ENCODE measurements at regions of chr15 and their contacts with region 1.

Region 1: GRCh38 chr15:37034835-37035748 is 65.3 kb downstream of the MEIS2 start:
- DNase-seq: peak; percentile 66
- ATAC-seq: peak; percentile 55
- H3K4me3 ChIP-seq: no peak overlapping the region
- H3K27ac ChIP-seq: no peak overlapping the region
- H3K4me1 ChIP-seq: peaks cover 17% of the 10 kb centered on the region
- H3K27me3 ChIP-seq: no peaks in the 10 kb centered on the region
- CTCF ChIP-seq: no peak
- POLR2A ChIP-seq: no peak
- RAD21 ChIP-seq: no peak

Region 2: DNA sequence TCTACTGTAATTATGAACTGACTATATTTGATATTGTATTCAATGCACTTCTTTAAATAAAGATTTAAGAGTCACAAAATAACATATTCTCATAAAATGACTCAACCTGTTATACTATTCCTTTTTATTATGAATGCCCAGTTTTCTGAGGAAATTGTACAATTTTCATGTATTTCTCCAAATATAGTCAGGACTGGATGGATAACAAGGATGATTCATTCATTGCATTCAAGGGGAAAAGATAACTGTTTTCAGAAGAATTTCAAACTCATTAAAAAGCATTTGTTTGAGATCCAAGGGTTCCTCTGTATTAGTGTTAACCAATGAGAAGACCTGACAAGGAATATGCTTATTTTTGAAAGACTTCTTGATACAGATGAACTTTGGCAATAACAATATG is 98.5 kb before region 1 on chr15:
- CTCF ChIA-PET with region 1: no interaction called
- POLR2A ChIA-PET with region 1: no interaction called
- dilution Hi-C with region 1: no loop called
- in situ Hi-C with region 1: no loop called
- intact Hi-C with region 1: no loop called
- DNase-seq: peak; percentile 67
- ATAC-seq: peak; percentile 75
- H3K4me3 ChIP-seq: no peak overlapping the region
- H3K27ac ChIP-seq: no peak overlapping the region
- H3K4me1 ChIP-seq: no peaks in the 10 kb centered on the region
- H3K27me3 ChIP-seq: no peaks in the 10 kb centered on the region
- CTCF ChIP-seq: no peak
- POLR2A ChIP-seq: no peak
- RAD21 ChIP-seq: no peak

Region 3: GRCh38 chr15:36970522-36970921 is 64.6 kb before region 1 on chr15:
- CTCF ChIA-PET with region 1: no interaction called
- POLR2A ChIA-PET with region 1: no interaction called
- dilution Hi-C with region 1: no loop called
- in situ Hi-C with region 1: loop called (anchors 10 kb)
- intact Hi-C with region 1: no loop called
- DNase-seq: no peak
- ATAC-seq: no peak
- H3K4me3 ChIP-seq: no peak overlapping the region
- H3K27ac ChIP-seq: no peak overlapping the region
- H3K4me1 ChIP-seq: peaks cover 4% of the 10 kb centered on the region; the same call in 1 of the 2 replicates
- H3K27me3 ChIP-seq: no peaks in the 10 kb centered on the region
- CTCF ChIP-seq: no peak
- POLR2A ChIP-seq: no peak
- RAD21 ChIP-seq: no peak

Region 4: GRCh38 chr15:37045859-37046740 is 11.0 kb after region 1 on chr15:
- CTCF ChIA-PET with region 1: interaction called, 10 read pairs
- POLR2A ChIA-PET with region 1: no interaction called
- dilution Hi-C with region 1: no loop called
- in situ Hi-C with region 1: no loop called
- intact Hi-C with region 1: no loop called
- DNase-seq: no peak
- ATAC-seq: no peak
- H3K4me3 ChIP-seq: no peak overlapping the region
- H3K27ac ChIP-seq: no peak overlapping the region
- H3K4me1 ChIP-seq: peaks cover 7% of the 10 kb centered on the region
- H3K27me3 ChIP-seq: no peaks in the 10 kb centered on the region
- CTCF ChIP-seq: no peak
- POLR2A ChIP-seq: no peak
- RAD21 ChIP-seq: no peak

Measured in IMR-90 (cell line).